Psoas muscle (tissue), 8 donors: ENCODE measurements at regions of chr3 and their contacts with region 1.

Region 1: DNA sequence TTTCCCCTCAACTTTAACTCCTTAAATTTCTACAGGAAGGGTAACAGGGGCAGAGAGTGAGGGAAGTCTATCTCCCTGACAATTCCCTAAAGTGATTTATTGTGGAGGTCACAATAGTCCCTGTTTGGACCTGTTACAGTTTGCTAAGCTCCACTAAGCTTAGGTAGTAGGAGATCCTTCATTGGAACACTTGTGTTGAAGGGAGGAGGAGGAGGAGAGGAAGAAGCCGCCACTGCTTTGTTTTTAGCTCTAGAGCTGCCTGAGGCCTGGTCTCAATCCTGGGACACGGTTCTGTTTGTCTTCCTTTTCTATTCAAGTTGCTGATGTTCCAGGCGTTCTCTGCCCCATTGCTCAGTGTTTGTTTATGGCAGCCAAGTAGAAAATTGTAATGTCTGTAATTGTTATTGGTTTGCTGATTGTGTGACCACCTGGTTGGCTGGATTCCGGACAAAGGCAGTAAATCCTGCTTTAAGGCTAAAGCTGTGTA is 48.4 kb downstream of the HES1 start:
- DNase-seq: no peak
- ATAC-seq: peak in 2 of 4 donors; percentile 48 to 50
- H3K4me3 ChIP-seq: no peak overlapping the region
- H3K27ac ChIP-seq: no peak overlapping the region
- H3K4me1 ChIP-seq: peaks cover 13% of the 10 kb centered on the region
- H3K27me3 ChIP-seq: no peaks in the 10 kb centered on the region
- CTCF ChIP-seq: no peak

Region 2: DNA sequence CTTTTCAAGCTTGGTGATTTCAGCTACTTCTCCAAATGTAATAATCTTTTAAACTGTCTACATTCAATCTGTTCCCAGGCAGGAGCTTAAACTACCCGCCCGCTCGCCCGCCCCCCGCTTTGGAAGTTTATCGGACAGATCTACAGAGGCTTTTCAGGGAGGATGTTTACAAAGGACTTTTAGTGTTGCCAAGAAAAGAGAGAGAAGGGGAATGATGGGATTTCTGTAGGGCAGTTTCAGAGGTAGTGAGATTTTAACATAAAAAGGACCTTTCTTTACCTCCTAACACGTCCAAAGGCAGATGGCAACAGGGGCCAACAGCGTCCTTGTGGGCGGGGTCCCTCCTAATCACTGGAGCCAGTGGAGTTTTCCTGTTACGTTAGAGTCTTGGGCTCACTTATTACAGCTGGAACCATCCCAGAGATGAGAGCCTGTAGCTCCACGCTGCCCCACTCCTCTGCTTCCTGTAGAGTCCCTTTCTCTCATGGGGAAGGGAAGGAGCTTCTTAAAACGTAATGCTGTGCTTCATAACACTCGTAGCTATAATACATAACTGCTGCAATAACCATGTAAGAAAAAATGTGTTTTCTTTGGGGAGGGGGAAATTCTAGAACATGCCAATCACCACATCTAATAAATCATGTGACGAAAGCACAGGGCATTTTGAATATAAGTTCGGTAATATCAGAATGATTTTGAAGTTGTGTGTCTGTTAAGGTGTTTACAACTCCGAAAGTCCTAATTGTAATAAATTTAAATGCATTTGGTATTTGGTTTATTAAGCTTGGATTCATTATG is 17.4 kb before region 1 on chr3:
- intact Hi-C with region 1: no loop called
- DNase-seq: no peak
- ATAC-seq: no peak
- H3K4me3 ChIP-seq: no peak overlapping the region
- H3K27ac ChIP-seq: no peak overlapping the region
- H3K4me1 ChIP-seq: no peaks in the 10 kb centered on the region
- H3K27me3 ChIP-seq: no peaks in the 10 kb centered on the region
- CTCF ChIP-seq: no peak

Region 3: GRCh38 chr3:194235160-194235559 is 50.9 kb after region 1 on chr3:
- intact Hi-C with region 1: loop called in 1 of 2 experiments (anchors 5 kb)
- DNase-seq: no peak
- ATAC-seq: no peak
- H3K4me3 ChIP-seq: no peak overlapping the region
- H3K27ac ChIP-seq: no peak overlapping the region
- H3K4me1 ChIP-seq: no peaks in the 10 kb centered on the region
- H3K27me3 ChIP-seq: peaks cover 0 to 4% (median 0%) of the 10 kb centered on the region in 3 donors
- CTCF ChIP-seq: no peak